ENCODE measurements at regions of chr19 and their contacts with region 1.

Region 1: DNA sequence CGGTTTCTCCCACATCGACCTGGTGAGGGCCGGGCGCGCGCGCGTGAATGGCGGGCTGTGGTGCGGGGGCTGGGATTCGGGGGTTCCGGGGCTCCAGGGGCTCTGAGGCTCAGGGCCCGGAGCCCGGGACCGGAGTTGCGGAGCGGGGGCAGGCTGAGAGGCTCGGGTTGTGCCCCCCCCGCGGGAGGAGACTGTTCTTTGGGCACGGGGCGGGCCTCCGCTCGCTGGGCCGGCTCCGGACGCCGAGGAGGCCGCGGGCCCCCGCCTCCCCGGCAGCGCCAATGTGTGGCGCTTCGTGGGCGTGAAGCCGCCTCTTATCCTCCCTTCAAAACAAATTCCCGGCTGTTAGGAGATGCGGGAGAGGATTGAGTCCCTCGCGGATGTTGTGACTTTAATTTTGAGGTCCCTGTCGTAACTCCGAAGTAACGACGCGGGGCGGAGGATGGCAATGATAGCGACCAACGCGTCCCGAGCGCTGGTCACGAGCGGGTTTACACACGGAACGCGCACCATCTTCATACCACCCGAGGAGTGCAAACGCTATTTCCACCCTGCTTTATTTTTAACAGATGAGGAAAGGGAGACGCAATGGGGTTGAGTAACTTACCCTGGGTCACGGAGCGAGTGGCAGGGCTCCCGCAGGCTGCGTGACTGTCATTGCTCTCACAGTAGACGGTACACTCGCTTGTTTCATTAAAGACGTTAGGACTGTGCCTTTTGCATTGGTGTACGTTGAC is 536 bp downstream of the UBA2 start:
- DNase-seq: peak in 32 of 42 donors; percentile 6 to 66 (median 36)

Region 2: GRCh38 chr19:34364830-34365462 is 63.8 kb before region 1 on chr19 and contains the start of gene GPI:
- intact Hi-C with region 1: loop called (anchors 10 kb)
- DNase-seq: peak in 41 of 42 donors; percentile 38 to 86 (median 71)